Right cardiac atrium (tissue), 5 donors: ENCODE measurements at regions of chr1 and their contacts with region 1.

Region 1: DNA sequence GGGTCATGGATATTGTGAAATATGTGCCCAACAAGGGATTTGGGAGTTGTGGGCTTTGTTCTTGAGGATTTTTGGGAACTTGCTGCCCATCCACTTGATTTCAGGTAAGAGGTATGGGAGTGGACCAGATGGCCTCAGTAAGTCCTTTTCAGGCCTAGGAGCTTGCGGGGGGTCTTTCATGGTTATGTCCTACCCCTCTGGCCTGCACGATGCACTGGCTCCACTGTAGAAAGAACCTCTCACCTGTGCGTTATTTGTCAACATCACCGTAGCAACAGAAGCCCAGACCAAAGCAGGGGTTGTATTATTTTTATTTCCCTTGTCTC is 8.6 kb downstream of the RIIAD1 start:
- DNase-seq: no peak
- ATAC-seq: no peak
- H3K4me3 ChIP-seq: no peak overlapping the region
- H3K27ac ChIP-seq: no peak overlapping the region
- H3K4me1 ChIP-seq: no peaks in the 10 kb centered on the region
- H3K27me3 ChIP-seq: no peaks in the 10 kb centered on the region

Region 2: GRCh38 chr1:151198255-151199127 is 531.4 kb before region 1 on chr1 and contains the start of gene PIP5K1A:
- intact Hi-C with region 1: no loop called
- DNase-seq: peak; percentile 99 to 100 (median 100)
- ATAC-seq: peak; percentile 95 to 97
- H3K4me3 ChIP-seq: peak within 1 kb of the TSS; percentile 93
- H3K27ac ChIP-seq: peak within 1 kb of the TSS; percentile 82
- H3K4me1 ChIP-seq: no peaks in the 10 kb centered on the region
- H3K27me3 ChIP-seq: no peaks in the 10 kb centered on the region
- total RNA-seq, gene PIP5K1A: 33.7 to 50.7 (median 38.2) TPM

Region 3: DNA sequence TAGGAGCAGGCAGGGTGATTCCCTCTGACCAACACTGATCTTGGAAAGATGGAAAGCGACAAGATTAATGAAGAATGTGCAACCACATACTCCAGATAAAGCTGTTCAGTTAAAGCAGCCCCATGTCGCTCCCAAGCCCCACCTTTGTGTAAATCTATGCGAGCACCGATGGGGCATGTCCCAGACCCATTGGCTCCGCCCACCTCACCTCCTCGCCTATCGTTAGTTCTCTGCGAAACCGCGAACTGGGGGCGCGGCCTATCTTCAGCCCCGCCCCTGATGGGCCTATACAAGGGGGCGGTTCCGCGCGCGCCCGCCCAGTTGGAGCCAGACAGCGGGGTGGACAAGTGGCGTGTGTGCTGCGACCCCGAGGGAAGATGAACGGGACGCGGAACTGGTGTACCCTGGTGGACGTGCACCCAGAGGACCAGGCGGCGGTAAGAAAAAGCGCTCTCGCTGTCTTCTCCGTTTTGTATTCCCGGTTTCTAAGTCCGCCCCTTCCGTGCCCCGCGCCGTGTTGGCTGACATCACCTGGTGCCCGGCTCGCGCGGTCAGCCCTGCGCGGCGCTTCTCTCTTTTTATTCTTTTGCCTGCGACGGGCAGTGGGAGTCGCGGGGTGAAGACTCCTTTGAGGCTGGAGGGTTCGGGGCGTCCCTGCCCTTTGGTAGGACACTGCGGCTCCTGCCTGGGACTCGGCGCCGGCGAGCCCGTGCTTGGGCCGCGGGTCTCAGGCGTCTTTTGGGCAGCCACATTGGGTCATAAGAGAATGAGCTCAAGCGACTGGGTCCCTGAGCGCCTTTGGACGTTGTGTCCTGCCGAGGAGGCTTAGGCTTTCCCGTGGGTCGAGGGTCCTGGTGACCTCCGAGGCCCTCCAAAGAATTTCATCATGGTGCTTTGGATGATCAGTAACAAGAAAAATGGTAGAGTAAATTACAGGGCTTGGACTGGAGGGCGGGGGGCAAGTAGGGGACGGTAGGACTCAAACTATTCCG is 189.6 kb before region 1 on chr1 and contains the start of gene TUFT1:
- intact Hi-C with region 1: loop called in 1 of 4 experiments (anchors 5 kb)
- DNase-seq: peak; percentile 94 to 98 (median 96)
- ATAC-seq: peak; percentile 97 to 98
- H3K4me3 ChIP-seq: peak within 1 kb of the TSS; percentile 67
- H3K27ac ChIP-seq: peak within 1 kb of the TSS; percentile 16
- H3K4me1 ChIP-seq: peaks cover 6% of the 10 kb centered on the region
- H3K27me3 ChIP-seq: no peaks in the 10 kb centered on the region
- total RNA-seq, gene TUFT1: 3.5 to 5.4 (median 4.5) TPM